IMR-90 (cell line): ENCODE measurements at regions of chr1 and their contacts with region 1.

Region 1: DNA sequence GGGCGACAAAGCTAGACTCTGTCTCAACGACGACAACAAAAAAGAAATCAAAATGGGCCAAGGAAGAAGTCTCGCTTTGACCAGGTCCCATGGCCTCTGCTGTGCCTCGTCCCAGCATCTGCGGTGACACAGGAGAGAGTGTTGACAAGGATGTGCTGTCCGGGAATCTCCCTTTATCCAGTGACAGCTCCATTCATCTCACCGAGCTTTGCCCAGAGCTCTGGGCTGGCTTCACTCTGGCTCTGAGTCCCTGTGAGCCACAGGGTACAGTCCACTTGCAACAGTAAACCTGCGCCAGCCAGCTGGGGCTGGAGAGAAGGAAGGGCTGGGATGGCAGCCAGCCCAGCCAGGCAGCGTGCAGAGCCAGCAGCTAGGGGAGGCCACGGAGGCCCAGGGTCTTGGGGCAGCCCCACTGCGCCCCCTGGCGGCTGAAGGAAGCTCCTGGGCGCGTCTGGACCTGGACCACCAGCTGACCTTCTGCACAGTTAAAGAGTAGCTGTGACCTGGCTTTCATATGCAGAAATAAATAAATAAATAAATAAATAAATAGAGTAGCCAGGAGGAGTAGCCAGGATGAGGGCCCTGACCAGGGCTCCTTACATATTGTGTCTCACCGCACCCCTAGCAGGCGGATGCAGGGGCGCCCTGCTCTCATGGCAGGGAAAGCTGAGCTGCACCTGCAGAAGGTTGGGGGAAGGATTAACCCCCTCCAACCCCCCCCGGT is 29.7 kb downstream of the ENO1 start:
- DNase-seq: peak; percentile 93
- ATAC-seq: peak; percentile 97
- H3K4me3 ChIP-seq: no peak overlapping the region
- H3K27ac ChIP-seq: no peak overlapping the region
- H3K4me1 ChIP-seq: peaks cover 2% of the 10 kb centered on the region
- H3K27me3 ChIP-seq: peaks cover 10% of the 10 kb centered on the region
- CTCF ChIP-seq: peak; percentile 95
- POLR2A ChIP-seq: 0 out of 2 replicates have a peak, but pooled peaks have one; percentile 33
- RAD21 ChIP-seq: peak; percentile 92

Region 2: GRCh38 chr1:8560611-8561544 is 287.9 kb before region 1 on chr1:
- CTCF ChIA-PET with region 1: interaction called, 6 read pairs
- POLR2A ChIA-PET with region 1: no interaction called
- dilution Hi-C with region 1: no loop called
- in situ Hi-C with region 1: loop called (anchors 10 kb)
- intact Hi-C with region 1: loop called (anchors 2 kb)
- DNase-seq: peak; percentile 60
- ATAC-seq: peak; percentile 85
- H3K4me3 ChIP-seq: no peak overlapping the region
- H3K27ac ChIP-seq: no peak overlapping the region
- H3K4me1 ChIP-seq: peaks cover 7% of the 10 kb centered on the region
- H3K27me3 ChIP-seq: no peaks in the 10 kb centered on the region
- CTCF ChIP-seq: peak; percentile 84
- POLR2A ChIP-seq: no peak
- RAD21 ChIP-seq: peak; percentile 89

Region 3: GRCh38 chr1:8858888-8859706 is 10.3 kb after region 1 on chr1:
- CTCF ChIA-PET with region 1: interaction called, 15 read pairs
- POLR2A ChIA-PET with region 1: no interaction called
- dilution Hi-C with region 1: no loop called
- in situ Hi-C with region 1: no loop called
- intact Hi-C with region 1: no loop called
- DNase-seq: peak; percentile 67
- ATAC-seq: peak; percentile 38
- H3K4me3 ChIP-seq: no peak overlapping the region
- H3K27ac ChIP-seq: no peak overlapping the region
- H3K4me1 ChIP-seq: peaks cover 8% of the 10 kb centered on the region
- H3K27me3 ChIP-seq: no peaks in the 10 kb centered on the region
- CTCF ChIP-seq: peak; percentile 60
- POLR2A ChIP-seq: no peak
- RAD21 ChIP-seq: peak; percentile 56

Region 4: GRCh38 chr1:8886589-8886988 is 37.8 kb after region 1 on chr1:
- CTCF ChIA-PET with region 1: no interaction called
- POLR2A ChIA-PET with region 1: no interaction called
- dilution Hi-C with region 1: no loop called
- in situ Hi-C with region 1: no loop called
- intact Hi-C with region 1: no loop called
- DNase-seq: no peak
- ATAC-seq: no peak
- H3K4me3 ChIP-seq: no peak overlapping the region
- H3K27ac ChIP-seq: no peak overlapping the region
- H3K4me1 ChIP-seq: peaks cover 6% of the 10 kb centered on the region
- H3K27me3 ChIP-seq: no peaks in the 10 kb centered on the region
- CTCF ChIP-seq: no peak
- POLR2A ChIP-seq: no peak
- RAD21 ChIP-seq: no peak

Region 5: GRCh38 chr1:10507111-10507879 is 1658.5 kb after region 1 on chr1:
- CTCF ChIA-PET with region 1: no interaction called
- POLR2A ChIA-PET with region 1: no interaction called
- dilution Hi-C with region 1: no loop called
- in situ Hi-C with region 1: no loop called
- intact Hi-C with region 1: no loop called
- DNase-seq: peak; percentile 83
- ATAC-seq: peak; percentile 79
- H3K4me3 ChIP-seq: no peak overlapping the region
- H3K27ac ChIP-seq: no peak overlapping the region
- H3K4me1 ChIP-seq: peaks cover 21% of the 10 kb centered on the region
- H3K27me3 ChIP-seq: no peaks in the 10 kb centered on the region
- CTCF ChIP-seq: peak; percentile 94
- POLR2A ChIP-seq: 0 out of 2 replicates have a peak, but pooled peaks have one; percentile 31
- RAD21 ChIP-seq: peak; percentile 92